AG04450 (cell line): ENCODE measurements at regions of chr2 and their contacts with region 1.

Region 1: GRCh38 chr2:8681786-8682692 is at the start of gene ID2:
- DNase-seq: peak; percentile 98
- H3K4me3 ChIP-seq: peak within 1 kb of the TSS; percentile 86
- H3K27ac ChIP-seq: peak within 1 kb of the TSS; percentile 85
- H3K27me3 ChIP-seq: no peaks in the 10 kb centered on the region
- CTCF ChIP-seq: 0 out of 2 replicates have a peak, but pooled peaks have one; percentile 8
- polyA plus RNA-seq, gene ID2: 74.3 and 74.5 TPM in 2 replicates

Region 2: DNA sequence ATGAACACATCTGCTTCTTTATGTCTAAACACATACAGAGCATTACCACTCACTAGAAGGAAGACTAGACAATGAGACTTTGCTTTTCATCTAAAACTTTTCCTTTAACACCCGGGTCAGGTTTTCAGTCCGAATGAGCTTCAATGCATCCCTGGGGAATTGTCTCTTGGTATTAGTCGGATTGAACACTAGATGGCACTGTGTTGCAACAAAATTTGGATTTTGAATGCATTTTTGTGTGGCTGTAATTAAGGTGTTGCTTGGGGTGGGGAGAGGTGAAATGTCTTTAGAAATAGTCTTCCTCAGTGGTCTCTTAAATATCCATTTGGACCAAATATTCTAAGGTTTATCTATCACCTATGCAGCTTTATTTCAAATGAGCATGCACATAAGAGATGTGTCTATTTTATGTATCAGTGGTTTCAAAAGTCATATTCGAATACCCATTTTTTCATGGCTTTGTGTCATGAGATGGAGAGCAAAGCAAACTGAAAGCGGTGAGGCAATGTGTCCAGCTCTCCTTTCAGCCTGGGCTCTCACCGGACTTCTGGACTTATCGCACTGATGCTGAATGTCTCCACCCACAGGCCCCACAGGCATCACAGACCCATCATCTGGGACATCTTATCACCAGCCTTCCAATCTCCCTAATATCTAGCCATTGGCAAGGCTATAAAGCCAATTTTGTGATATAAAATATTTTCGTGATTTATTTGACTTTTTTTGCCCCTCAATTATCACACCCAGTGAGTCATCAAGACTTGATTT is 1254.6 kb before region 1 on chr2:
- CTCF ChIA-PET with region 1: interaction called, 24 read pairs
- POLR2A ChIA-PET with region 1: interaction called, 7 read pairs
- DNase-seq: peak; percentile 4
- H3K4me3 ChIP-seq: no peak overlapping the region
- H3K27ac ChIP-seq: no peak overlapping the region
- H3K27me3 ChIP-seq: peaks cover 5% of the 10 kb centered on the region
- CTCF ChIP-seq: peak; percentile 71

Region 3: DNA sequence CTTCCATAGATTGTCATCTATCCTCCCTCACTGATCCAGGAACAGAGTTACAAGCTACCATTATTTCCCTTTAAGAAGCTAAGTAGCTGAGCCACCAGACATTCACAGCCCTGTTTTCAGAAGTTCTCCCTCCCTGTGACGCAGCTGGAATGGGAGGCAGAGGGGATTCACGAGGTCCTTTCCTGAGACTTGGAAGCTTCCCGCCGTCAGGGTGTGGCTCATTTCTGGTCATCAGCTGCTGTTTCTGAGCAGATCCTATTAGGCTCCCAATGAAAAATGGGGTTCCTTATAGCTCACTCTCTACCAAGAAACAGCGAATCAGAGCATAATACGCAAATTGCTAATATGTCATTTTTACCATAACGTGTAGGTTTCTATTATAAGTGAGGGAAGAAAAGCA is 559.5 kb before region 1 on chr2:
- CTCF ChIA-PET with region 1: no interaction called
- POLR2A ChIA-PET with region 1: interaction called, 14 read pairs
- DNase-seq: no peak
- H3K4me3 ChIP-seq: no peak overlapping the region
- H3K27ac ChIP-seq: no peak overlapping the region
- H3K27me3 ChIP-seq: no peaks in the 10 kb centered on the region
- CTCF ChIP-seq: no peak

Region 4: DNA sequence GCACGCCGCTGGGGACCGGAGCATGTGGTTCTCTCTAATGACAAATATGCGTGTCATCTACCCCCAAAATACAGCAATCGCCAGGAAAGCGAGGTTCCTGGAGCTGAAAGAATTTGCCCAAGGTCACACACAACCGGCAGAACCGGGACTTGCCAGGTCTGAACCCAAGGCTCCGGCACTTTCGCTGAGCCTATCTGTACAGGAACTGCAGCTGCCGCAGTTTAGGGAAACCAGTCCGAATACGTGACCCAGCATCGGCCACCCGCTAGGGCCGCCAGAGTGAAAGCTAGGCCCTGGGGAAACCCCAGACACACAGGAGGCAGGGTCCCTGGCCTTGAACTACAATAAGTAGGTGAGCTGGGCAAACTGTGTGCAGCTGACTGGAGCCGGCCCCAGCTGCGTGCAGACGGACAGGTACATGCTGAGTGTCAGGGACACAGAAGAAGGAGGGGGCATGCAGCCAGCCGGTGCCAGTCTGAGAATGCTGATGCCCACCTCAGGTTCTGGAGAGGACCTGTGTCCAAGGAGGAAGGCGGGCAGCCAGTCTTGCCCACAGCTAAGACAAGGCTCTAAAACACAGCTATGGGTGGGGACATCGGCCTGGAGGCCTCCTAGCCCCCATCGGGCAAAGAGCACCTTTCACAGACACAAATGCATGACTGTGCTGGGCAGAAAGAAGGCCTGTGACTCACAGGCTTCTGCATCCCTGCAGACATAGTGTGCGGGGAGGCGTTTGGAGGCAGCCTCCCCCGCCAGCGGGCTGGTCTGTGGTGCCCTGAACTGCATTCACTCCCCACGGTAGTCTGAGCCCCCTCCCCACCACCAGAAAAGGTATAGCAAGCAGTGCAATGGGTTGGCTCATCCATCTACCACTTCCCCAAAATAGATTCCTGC is 107.6 kb before region 1 on chr2:
- CTCF ChIA-PET with region 1: no interaction called
- POLR2A ChIA-PET with region 1: interaction called, 10 read pairs
- DNase-seq: no peak
- H3K4me3 ChIP-seq: no peak overlapping the region
- H3K27ac ChIP-seq: no peak overlapping the region
- H3K27me3 ChIP-seq: no peaks in the 10 kb centered on the region
- CTCF ChIP-seq: no peak

Region 5: DNA sequence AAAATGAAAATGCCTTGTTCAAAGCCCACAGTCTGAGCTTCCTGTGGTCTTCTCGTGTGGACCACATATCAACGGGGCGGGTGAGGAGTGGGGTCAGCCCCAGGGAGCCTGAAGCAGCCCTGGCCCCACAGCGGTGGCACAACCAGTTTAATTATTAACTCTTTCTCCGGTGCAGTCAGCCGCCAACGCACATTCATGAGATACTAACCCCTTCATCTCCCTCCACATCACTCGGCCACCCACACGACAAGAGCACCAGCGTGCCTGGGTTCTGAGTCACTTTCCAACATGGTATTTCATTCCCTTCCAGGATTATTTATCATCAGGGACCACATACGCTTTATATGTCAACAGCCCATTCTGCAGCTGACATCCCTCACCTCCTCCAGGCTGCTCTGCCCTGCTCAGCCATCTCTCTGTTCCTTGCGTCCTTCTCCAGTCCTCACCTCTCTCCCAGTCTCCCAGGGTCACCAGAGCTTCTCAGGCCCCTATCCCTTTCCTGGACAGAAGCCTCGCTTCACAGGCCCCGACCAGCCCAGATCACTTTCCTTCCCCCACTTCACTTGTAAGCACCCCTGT is 48.2 kb before region 1 on chr2:
- CTCF ChIA-PET with region 1: interaction called, 3 read pairs
- POLR2A ChIA-PET with region 1: interaction called, 90 read pairs
- DNase-seq: peak; percentile 79
- H3K4me3 ChIP-seq: peak overlapping the region; percentile 11
- H3K27ac ChIP-seq: peak overlapping the region; percentile 91
- H3K27me3 ChIP-seq: no peaks in the 10 kb centered on the region
- CTCF ChIP-seq: no peak

Region 6: DNA sequence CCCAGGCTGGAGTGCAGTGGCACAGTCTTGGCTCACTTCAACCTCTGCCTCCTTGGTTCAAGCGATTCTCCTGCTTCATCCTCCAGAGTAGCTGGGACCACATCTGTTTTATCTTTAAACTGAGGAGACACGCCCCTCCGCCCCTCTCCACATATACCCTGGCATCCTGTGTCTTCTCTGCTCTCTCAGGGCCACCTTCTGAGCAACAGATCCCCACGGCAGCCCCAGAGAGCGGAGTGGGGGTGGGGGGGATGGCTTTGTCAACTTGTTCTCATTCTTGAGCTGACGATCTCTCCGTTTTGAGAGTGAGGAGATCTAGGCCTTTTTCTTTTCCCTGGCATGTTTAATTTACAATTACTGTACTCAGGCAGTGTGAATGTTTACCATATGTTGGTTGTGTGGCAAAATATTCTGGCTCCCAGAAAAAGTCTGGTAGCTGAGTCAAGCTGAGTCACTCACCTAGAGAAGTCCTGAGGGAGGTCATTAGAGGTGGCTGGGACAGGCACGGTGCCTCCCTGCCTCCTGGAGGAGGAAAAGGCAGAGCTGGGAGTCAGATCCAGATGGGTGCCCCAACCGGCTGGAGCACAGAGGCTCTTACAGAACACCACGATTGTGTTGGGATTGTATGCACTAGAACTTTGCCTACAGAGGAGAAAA is 19.7 kb before region 1 on chr2:
- CTCF ChIA-PET with region 1: no interaction called
- POLR2A ChIA-PET with region 1: interaction called, 27 read pairs
- DNase-seq: no peak
- H3K4me3 ChIP-seq: no peak overlapping the region
- H3K27ac ChIP-seq: peak overlapping the region; percentile 89
- H3K27me3 ChIP-seq: no peaks in the 10 kb centered on the region
- CTCF ChIP-seq: peak; percentile 31